Ascending aorta (tissue), 2 donors: ENCODE measurements at regions of chr15 and their contacts with region 1.

Region 1: GRCh38 chr15:55407949-55408791 is at the starts of genes CCPG1 and PIERCE2:
- DNase-seq: peak; percentile 79 to 96
- H3K4me3 ChIP-seq: peak within 1 kb of the TSS; percentile 79 to 81
- H3K27ac ChIP-seq: peak within 1 kb of the TSS; percentile 93
- H3K4me1 ChIP-seq: peaks cover 5 to 27% of the 10 kb centered on the region in 2 donors
- H3K27me3 ChIP-seq: no peaks in the 10 kb centered on the region
- CTCF ChIP-seq: peak; percentile 90 to 96 (median 96)
- total RNA-seq, gene CCPG1: 44.5 TPM
- total RNA-seq, gene PIERCE2: not detected

Region 2: DNA sequence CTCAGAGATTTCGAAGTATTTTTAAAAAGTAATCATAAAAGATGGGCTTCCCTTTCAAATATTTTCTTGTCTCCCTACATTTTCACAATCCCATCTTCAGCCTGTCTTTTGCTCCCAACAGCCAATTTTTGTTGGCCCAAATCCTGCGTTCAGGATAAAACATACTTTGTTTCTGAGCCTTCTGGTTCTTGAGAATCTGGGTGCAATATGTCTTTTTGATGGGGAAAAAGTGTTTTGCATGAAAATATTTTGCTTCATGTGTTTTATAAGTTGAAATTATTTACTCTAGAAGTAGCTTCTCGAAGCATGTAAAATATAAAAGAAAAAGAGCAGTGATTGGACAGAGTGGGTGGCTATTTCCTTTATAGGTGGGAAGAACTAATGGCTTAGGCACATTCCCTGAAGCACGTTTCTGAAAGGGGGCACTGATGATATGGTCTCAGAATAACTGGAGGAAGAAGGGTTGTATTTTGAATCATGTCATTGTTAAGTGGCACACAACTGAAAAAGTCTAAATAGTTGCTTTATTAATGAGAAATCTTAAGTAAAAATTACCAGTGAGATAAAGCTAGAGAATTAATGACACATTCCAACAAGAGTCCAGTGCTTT is 1426.0 kb before region 1 on chr15:
- intact Hi-C with region 1: loop called (anchors 10 kb)
- DNase-seq: no peak
- H3K4me3 ChIP-seq: peak overlapping the region in 1 of 2 donors; percentile 65
- H3K27ac ChIP-seq: peak overlapping the region; percentile 20 to 38
- H3K4me1 ChIP-seq: no peaks in the 10 kb centered on the region
- H3K27me3 ChIP-seq: no peaks in the 10 kb centered on the region
- CTCF ChIP-seq: no peak

Region 3: DNA sequence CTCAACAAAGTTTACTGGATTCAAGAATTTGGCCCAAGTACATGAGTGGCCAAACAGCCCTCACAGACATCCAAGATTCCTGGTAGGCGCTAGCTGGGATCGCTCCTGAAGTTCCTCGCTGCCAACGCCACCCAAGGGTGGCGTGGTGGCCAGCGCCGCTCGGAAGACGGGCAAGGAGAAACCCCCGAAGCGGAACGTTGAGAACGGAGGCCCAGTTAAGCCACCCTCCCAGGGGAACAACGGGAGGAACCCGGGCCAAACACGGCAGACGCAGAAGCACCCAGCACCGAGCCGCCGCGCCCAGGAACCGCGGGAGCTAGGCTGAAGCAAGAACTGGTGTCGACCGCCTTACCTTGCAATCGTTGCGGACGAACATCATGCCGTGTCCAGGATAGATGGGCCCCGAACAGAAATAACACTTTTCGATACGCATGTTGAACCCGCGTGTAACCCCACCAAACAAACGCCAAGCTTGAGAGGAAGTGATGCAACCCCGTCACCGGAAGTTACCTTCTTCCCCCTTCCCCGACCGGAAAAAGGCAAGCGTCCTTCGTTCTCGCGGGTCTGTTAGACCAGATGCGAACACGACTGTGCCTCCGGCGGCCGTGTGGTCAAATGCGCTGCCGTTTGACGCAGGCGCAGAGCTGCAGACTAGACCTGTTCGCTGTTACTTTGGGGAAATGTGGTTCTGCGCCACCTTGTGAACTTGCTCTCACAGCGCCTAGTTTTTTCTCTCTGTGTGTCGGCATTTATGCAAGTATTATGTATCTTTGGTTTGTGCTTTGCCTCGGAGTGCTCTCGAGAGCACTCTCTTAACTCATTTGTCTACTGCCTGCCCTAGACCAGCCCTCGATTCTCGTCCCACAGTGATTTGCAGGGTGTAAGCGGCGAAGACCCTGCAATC is 211.5 kb before region 1 on chr15 and contains the start of gene RSL24D1:
- intact Hi-C with region 1: loop called (anchors 1 kb)
- DNase-seq: peak; percentile 87 to 99
- H3K4me3 ChIP-seq: peak within 1 kb of the TSS; percentile 82 to 95
- H3K27ac ChIP-seq: peak within 1 kb of the TSS; percentile 90 to 96
- H3K4me1 ChIP-seq: peaks cover 4 to 14% of the 10 kb centered on the region in 2 donors
- H3K27me3 ChIP-seq: no peaks in the 10 kb centered on the region
- CTCF ChIP-seq: peak; percentile 48 to 57 (median 49)
- total RNA-seq, gene RSL24D1: 15.3 TPM

Region 4: GRCh38 chr15:55221090-55222011 is 186.8 kb before region 1 on chr15:
- intact Hi-C with region 1: loop called (anchors 1 kb)
- DNase-seq: peak in 1 of 2 donors; percentile 66
- H3K4me3 ChIP-seq: no peak overlapping the region
- H3K27ac ChIP-seq: peak overlapping the region; percentile 76 to 87
- H3K4me1 ChIP-seq: peaks cover 0 to 4% of the 10 kb centered on the region in 2 donors
- H3K27me3 ChIP-seq: no peaks in the 10 kb centered on the region
- CTCF ChIP-seq: no peak

Region 5: DNA sequence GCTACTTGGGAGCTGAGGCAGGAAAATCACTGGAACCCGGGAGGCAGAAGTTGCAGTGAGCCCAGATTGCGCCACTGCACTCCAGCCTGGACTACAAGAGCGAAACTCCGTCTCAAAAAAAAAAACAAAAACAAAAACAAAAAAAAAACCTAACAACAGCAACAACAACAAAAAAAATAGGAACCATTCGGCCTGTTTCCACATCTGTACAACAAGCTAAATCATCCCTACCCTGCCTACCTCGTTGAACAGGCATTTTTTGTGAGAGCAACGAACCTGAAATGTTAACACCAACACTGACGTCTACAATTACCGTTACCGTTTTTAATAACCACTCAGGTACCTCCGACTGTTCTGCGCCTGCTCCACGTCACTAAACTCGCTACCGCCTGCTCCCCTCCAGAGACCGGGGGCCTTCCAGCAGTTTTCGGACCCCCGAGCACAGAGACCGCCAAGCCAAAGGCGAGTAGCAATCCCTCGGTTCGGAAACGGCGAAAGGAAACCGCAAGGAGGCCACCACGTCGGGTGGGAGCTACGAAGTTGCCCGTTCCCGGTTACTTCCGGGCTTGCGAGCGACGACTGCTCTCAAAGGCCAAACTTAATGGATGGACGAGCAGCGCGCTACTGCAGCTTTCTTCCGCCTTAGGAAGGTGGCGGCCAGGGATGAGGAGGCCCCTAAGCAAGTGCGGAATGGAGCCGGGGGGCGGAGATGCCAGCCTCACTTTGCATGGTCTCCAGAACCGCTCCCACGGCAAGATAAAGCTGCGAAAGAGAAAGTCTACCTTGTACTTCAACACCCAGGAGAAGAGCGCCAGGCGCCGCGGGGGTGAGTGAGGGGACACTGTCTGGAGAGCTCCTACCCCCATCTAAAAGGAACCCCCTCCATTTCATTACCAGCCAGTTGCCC is 89.3 kb before region 1 on chr15 and contains the starts of genes PIGB and PIGBOS1:
- intact Hi-C with region 1: loop called (anchors 2 kb)
- DNase-seq: peak; percentile 39 to 90
- H3K4me3 ChIP-seq: peak within 1 kb of the TSS; percentile 65 to 71
- H3K27ac ChIP-seq: peak within 1 kb of the TSS; percentile 89
- H3K4me1 ChIP-seq: peaks cover 0 to 17% of the 10 kb centered on the region in 2 donors
- H3K27me3 ChIP-seq: no peaks in the 10 kb centered on the region
- CTCF ChIP-seq: peak; percentile 6 to 15 (median 9)
- total RNA-seq, gene PIGB: 50.3 TPM
- total RNA-seq, gene PIGBOS1: 4.7 TPM

Region 6: GRCh38 chr15:55494931-55495330 is 86.8 kb after region 1 on chr15:
- intact Hi-C with region 1: loop called (anchors 5 kb)
- DNase-seq: no peak
- H3K4me3 ChIP-seq: no peak overlapping the region
- H3K27ac ChIP-seq: no peak overlapping the region
- H3K4me1 ChIP-seq: peaks cover 0 to 4% of the 10 kb centered on the region in 2 donors
- H3K27me3 ChIP-seq: no peaks in the 10 kb centered on the region
- CTCF ChIP-seq: no peak

Region 7: DNA sequence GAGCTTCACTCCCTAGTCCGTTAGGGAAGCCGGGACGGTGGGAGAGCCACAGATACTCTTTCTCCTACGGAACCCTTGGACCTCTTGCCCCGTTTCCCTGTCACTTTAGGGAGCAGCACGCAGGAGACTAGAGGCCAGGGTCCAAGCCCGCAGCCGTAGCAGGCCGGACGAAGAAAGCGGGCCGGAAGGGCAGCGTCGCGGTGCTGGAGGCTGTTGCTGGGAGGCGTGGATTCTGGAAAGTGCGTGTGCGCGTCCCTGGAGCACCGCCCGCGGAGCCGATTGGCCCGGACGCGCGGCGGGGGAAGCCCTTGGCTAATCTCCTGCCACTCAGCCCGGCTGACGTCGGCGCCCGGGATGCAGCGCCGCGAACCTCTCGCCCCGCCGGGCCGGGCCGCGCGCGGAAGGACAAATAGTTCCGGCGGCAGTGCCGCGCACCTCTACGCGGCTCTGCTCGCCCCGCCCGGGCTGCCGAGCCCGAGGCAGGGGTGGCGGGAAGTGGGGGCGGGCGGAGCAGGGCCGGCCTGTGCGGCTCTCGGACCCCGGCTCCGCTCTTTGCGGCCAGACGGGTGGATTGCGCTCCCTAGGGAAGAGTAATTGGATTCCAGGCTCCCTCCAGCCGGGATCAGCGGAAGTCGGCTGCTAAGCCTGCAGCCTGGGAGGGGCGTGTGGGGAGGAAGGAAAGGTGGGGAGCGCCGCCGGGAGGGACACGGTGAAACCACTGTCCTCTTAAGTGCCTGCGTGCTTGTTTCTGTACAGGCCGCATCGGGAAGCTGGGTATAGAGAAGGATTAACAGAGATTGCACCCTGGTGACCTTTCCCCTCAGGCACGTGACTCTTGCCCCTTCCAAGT is 1479.0 kb after region 1 on chr15:
- intact Hi-C with region 1: loop called (anchors 5 kb)
- DNase-seq: peak; percentile 64 to 96
- H3K4me3 ChIP-seq: peak overlapping the region; percentile 68 to 93
- H3K27ac ChIP-seq: peak overlapping the region; percentile 93 to 99
- H3K4me1 ChIP-seq: peaks cover 3 to 20% of the 10 kb centered on the region in 2 donors
- H3K27me3 ChIP-seq: no peaks in the 10 kb centered on the region
- CTCF ChIP-seq: no peak